Prostate gland (tissue), 2 donors: ENCODE measurements at regions of chr17 and their contacts with region 1.

Region 1: GRCh38 chr17:34858591-34859565 is 102.4 kb downstream of the CCT6B start:
- DNase-seq: no peak
- H3K4me3 ChIP-seq: no peak overlapping the region
- H3K27ac ChIP-seq: no peak overlapping the region
- H3K4me1 ChIP-seq: no peaks in the 10 kb centered on the region
- H3K27me3 ChIP-seq: no peaks in the 10 kb centered on the region
- CTCF ChIP-seq: no peak
- POLR2A ChIP-seq: no peak

Region 2: GRCh38 chr17:34886831-34887230 is 28.0 kb after region 1 on chr17:
- intact Hi-C with region 1: loop called (anchors 1 kb)
- DNase-seq: no peak
- H3K4me3 ChIP-seq: no peak overlapping the region
- H3K27ac ChIP-seq: no peak overlapping the region
- H3K4me1 ChIP-seq: no peaks in the 10 kb centered on the region
- H3K27me3 ChIP-seq: no peaks in the 10 kb centered on the region
- CTCF ChIP-seq: no peak
- POLR2A ChIP-seq: no peak

Region 3: GRCh38 chr17:34990921-34991365 is 132.1 kb after region 1 on chr17:
- intact Hi-C with region 1: no loop called
- DNase-seq: peak; percentile 81
- H3K4me3 ChIP-seq: no peak overlapping the region
- H3K27ac ChIP-seq: peak overlapping the region; percentile 73 to 78
- H3K4me1 ChIP-seq: peaks cover 7% of the 10 kb centered on the region
- H3K27me3 ChIP-seq: no peaks in the 10 kb centered on the region
- CTCF ChIP-seq: no peak
- POLR2A ChIP-seq: no peak